Cardiac septum (tissue), 1 donor: ENCODE measurements at regions of chr1 and their contacts with region 1.

Region 1: DNA sequence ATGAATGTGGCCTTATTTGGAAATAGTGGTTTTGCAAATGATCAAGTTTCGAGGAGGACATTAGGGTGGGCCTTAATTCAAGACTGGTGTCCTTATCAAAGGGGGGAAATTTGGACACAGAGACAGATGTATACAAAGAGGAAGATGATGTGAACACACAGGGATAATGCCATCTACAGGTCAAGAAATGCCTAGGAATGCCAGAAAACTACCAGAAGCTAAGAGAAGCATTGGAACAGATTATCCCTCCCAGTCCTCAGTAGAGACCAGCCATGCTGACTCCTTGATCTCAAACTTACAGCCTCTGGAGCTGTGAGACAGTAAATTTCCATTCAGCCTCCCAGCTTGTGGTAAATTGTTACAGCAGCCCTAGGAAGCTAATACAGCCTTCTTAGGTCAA is 151.4 kb downstream of the PTGER3 start:
- DNase-seq: no peak

Region 2: GRCh38 chr1:70685300-70686241 is 210.7 kb before region 1 on chr1:
- intact Hi-C with region 1: loop called (anchors 10 kb)
- DNase-seq: no peak

Region 3: GRCh38 chr1:70737134-70737533 is 159.1 kb before region 1 on chr1:
- intact Hi-C with region 1: no loop called
- DNase-seq: no peak

Region 4: GRCh38 chr1:70818401-70818800 is 77.8 kb before region 1 on chr1:
- intact Hi-C with region 1: no loop called
- DNase-seq: no peak